HepG2 (cell line): ENCODE measurements at regions of chr9 and their contacts with region 1.

Region 1: DNA sequence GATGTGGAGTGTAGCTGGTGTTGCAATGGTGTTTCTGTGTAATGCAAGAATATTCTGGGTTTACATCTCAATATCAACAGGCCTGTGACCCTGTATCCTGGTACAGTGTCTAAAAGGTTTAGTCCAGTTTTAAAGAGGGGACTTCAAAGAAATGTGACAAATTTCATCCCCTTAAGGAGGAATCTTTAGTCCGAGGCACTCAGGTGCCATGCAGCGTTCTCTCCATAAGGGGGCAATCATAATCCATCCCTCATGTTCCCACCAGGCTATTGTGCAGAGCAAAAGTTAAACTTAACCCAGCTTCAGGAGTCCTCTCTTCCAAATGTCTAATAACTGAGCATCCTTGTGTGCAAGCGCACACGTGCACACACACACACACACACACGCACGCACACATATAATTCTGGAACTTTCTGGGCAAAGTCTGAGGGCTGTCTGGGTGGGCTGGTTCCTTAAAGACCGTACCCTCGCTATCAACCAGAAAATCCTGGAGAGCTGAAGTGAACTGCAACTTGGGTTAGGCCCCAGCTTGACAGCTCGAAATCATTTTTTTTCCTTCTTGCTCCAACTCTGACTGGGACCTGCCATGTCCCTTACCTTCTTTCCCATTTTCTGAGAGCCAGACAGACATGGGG is 46.0 kb downstream of the CRB2 start:
- DNase-seq: peak; percentile 39
- ATAC-seq: peak; percentile 87
- H3K4me3 ChIP-seq: no peak overlapping the region
- H3K27ac ChIP-seq: no peak overlapping the region
- H3K4me1 ChIP-seq: no peaks in the 10 kb centered on the region
- H3K27me3 ChIP-seq: no peaks in the 10 kb centered on the region
- CTCF ChIP-seq: peak; percentile 81
- EP300 ChIP-seq: no peak
- POLR2A ChIP-seq: no peak
- RAD21 ChIP-seq: peak; percentile 78

Region 2: DNA sequence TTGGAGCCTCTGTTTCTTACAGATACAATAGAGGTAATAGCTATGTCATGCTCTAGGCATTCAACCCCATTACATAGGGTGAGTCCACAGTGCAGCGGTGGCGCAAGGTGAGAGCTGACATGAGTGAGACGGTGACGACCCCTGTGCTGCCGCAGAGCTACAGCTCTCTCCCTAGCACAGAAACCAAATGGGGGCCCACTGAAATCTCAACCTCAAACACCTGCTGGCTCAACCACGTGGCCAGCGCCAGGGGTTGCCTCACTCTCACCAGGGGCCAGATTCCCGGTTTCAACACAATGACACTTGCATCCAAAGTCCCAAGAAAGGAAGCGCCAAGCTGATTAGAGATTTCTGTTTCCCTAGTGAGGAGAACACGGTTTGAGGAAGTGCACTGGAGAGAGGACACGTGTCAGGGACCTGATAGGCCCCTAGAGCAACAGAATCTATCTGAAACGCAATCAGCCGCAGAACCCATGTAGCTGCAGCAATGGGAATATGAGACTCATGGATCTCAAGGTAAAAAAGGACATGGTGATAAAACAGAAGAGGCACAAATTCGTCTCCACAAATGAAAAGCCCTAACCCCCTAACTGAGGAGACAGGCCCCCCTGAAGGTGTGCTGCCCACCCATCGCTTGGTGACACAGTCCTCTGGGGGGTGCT is 68.3 kb after region 1 on chr9:
- CTCF ChIA-PET with region 1: no interaction called
- POLR2A ChIA-PET with region 1: no interaction called
- in situ Hi-C with region 1: no loop called
- intact Hi-C with region 1: loop called (anchors 5 kb)
- DNase-seq: peak; percentile 95
- ATAC-seq: peak; percentile 57
- H3K4me3 ChIP-seq: no peak overlapping the region
- H3K27ac ChIP-seq: peak overlapping the region; percentile 90
- H3K4me1 ChIP-seq: peaks cover 66% of the 10 kb centered on the region
- H3K27me3 ChIP-seq: no peaks in the 10 kb centered on the region
- CTCF ChIP-seq: no peak
- EP300 ChIP-seq: peak; percentile 82 to 91; a peak in 3 of 4 replicates
- POLR2A ChIP-seq: peak; percentile 48 to 59
- RAD21 ChIP-seq: peak; percentile 8; the same call in 1 of the 2 replicates

Region 3: GRCh38 chr9:123508048-123508447 is 106.1 kb after region 1 on chr9:
- CTCF ChIA-PET with region 1: no interaction called
- POLR2A ChIA-PET with region 1: no interaction called
- in situ Hi-C with region 1: loop called (anchors 10 kb)
- intact Hi-C with region 1: no loop called
- DNase-seq: no peak
- ATAC-seq: no peak
- H3K4me3 ChIP-seq: no peak overlapping the region
- H3K27ac ChIP-seq: no peak overlapping the region
- H3K4me1 ChIP-seq: no peaks in the 10 kb centered on the region
- H3K27me3 ChIP-seq: no peaks in the 10 kb centered on the region
- CTCF ChIP-seq: no peak
- EP300 ChIP-seq: no peak
- POLR2A ChIP-seq: no peak
- RAD21 ChIP-seq: no peak

Region 4: GRCh38 chr9:124040935-124041816 is 639.2 kb after region 1 on chr9:
- CTCF ChIA-PET with region 1: interaction called, 5 read pairs
- POLR2A ChIA-PET with region 1: no interaction called
- in situ Hi-C with region 1: loop called (anchors 25 kb)
- intact Hi-C with region 1: loop called (anchors 2 kb)
- DNase-seq: no peak
- ATAC-seq: peak; percentile 58
- H3K4me3 ChIP-seq: peak overlapping the region; percentile 52 to 75 (median 55)
- H3K27ac ChIP-seq: no peak overlapping the region
- H3K4me1 ChIP-seq: peaks cover 57% of the 10 kb centered on the region
- H3K27me3 ChIP-seq: peaks cover 4 to 57% of the 10 kb centered on the region in 2 experiments; a peak in 4 of 5 replicates
- CTCF ChIP-seq: peak; percentile 80
- EP300 ChIP-seq: no peak
- POLR2A ChIP-seq: no peak
- RAD21 ChIP-seq: peak; percentile 88